ENCODE measurements at regions of chr16 and their contacts with region 1.

Region 1: GRCh38 chr16:22190776-22191531 is 15.1 kb upstream of the EEF2K start:
- DNase-seq: peak; percentile 99
- H3K4me3 ChIP-seq: peak overlapping the region; percentile 69 to 73
- H3K4me3 Mint-ChIP-seq: peak overlapping the region; percentile 82 to 98 (median 94)
- H3K27ac ChIP-seq: peak overlapping the region; percentile 95
- H3K27ac Mint-ChIP-seq: peak overlapping the region; percentile 99 to 100 (median 100)
- H3K4me1 ChIP-seq: peaks cover 70% of the 10 kb centered on the region
- H3K4me1 Mint-ChIP-seq: peaks cover 47 to 82% (median 62%) of the 10 kb centered on the region in 4 donors
- H3K27me3 ChIP-seq: no peaks in the 10 kb centered on the region
- H3K27me3 Mint-ChIP-seq: peaks cover 2 to 5% of the 10 kb centered on the region in 2 donors

Region 2: GRCh38 chr16:20741554-20742285 is 1449.2 kb before region 1 on chr16 and contains the start of gene THUMPD1:
- CTCF ChIA-PET with region 1: no interaction called
- POLR2A ChIA-PET with region 1: no interaction called
- intact Hi-C with region 1: loop called (anchors 10 kb)
- DNase-seq: peak; percentile 91 to 98 (median 96)
- H3K4me3 ChIP-seq: peak within 1 kb of the TSS; percentile 76 to 90
- H3K4me3 Mint-ChIP-seq: peak within 1 kb of the TSS; percentile 95 to 98 (median 96)
- H3K27ac ChIP-seq: peak within 1 kb of the TSS; percentile 98
- H3K27ac Mint-ChIP-seq: peak within 1 kb of the TSS; percentile 98 to 99 (median 99)
- H3K4me1 ChIP-seq: peaks cover 34% of the 10 kb centered on the region
- H3K4me1 Mint-ChIP-seq: peaks cover 15 to 33% (median 23%) of the 10 kb centered on the region in 4 donors
- H3K27me3 ChIP-seq: no peaks in the 10 kb centered on the region
- H3K27me3 Mint-ChIP-seq: no peaks in the 10 kb centered on the region
- total RNA-seq, gene THUMPD1: 73.2 to 74.4 TPM

Region 3: DNA sequence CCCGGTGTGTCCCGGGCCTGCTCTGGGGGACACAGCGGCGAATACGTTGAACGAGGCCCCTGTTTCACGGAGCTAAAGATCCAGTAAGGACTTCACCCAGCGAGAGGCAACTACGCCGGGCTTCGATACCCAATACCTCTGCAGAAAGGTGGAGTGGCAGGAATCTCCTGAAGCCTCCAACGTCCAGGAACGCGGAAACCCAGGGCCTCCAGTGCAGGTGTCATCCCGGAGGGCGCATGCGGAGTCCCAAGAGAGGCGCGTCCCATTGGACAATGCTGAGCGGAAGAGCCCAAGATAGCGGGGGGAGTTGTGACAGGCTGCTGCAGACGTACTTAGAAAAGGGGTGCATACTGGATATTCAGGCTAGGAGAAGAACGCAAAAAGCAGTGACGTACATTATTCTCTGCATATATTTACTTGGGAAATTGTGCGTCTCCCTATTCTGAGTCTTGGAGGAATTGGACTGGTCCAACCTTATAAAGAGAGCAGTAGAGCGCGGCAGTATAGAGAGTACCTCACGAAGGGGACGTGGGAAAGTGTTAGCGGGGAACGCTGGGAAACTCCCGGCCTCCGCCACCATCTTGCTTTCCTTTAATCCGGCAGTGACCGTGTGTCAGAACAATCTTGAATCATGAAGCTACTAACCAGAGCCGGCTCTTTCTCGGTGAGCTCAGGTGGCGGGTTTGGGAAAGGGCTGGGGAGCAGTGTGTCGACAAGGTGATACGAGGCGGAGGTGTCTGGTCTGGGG is 238.0 kb before region 1 on chr16 and contains the start of gene UQCRC2:
- CTCF ChIA-PET with region 1: interaction called, 16 read pairs
- POLR2A ChIA-PET with region 1: interaction called, 67 read pairs
- intact Hi-C with region 1: loop called (anchors 1 kb)
- DNase-seq: peak; percentile 90 to 94 (median 92)
- H3K4me3 ChIP-seq: peak within 1 kb of the TSS; percentile 98
- H3K4me3 Mint-ChIP-seq: peak within 1 kb of the TSS; percentile 96 to 100 (median 98)
- H3K27ac ChIP-seq: peak within 1 kb of the TSS; percentile 98
- H3K27ac Mint-ChIP-seq: peak within 1 kb of the TSS; percentile 95 to 100 (median 99)
- H3K4me1 ChIP-seq: peaks cover 53% of the 10 kb centered on the region
- H3K4me1 Mint-ChIP-seq: peaks cover 36 to 82% (median 59%) of the 10 kb centered on the region in 4 donors
- H3K27me3 ChIP-seq: no peaks in the 10 kb centered on the region
- H3K27me3 Mint-ChIP-seq: no peaks in the 10 kb centered on the region
- total RNA-seq, gene UQCRC2: 170 to 177 TPM

Region 4: GRCh38 chr16:22007509-22008214 is 183.3 kb before region 1 on chr16 and contains the start of gene MOSMO:
- CTCF ChIA-PET with region 1: interaction called, 172 read pairs
- POLR2A ChIA-PET with region 1: interaction called, 98 read pairs
- intact Hi-C with region 1: loop called (anchors 1 kb)
- DNase-seq: peak; percentile 65 to 73 (median 66)
- H3K4me3 ChIP-seq: peak within 1 kb of the TSS; percentile 12 to 74
- H3K4me3 Mint-ChIP-seq: peak within 1 kb of the TSS; percentile 86 to 93 (median 90)
- H3K27ac ChIP-seq: peak within 1 kb of the TSS; percentile 78
- H3K27ac Mint-ChIP-seq: peak within 1 kb of the TSS; percentile 61 to 97 (median 87)
- H3K4me1 ChIP-seq: peaks cover 41% of the 10 kb centered on the region
- H3K4me1 Mint-ChIP-seq: peaks cover 32 to 54% (median 40%) of the 10 kb centered on the region in 4 donors
- H3K27me3 ChIP-seq: no peaks in the 10 kb centered on the region
- H3K27me3 Mint-ChIP-seq: no peaks in the 10 kb centered on the region
- total RNA-seq, gene MOSMO: 21.9 to 23.4 TPM

Region 5: GRCh38 chr16:22177968-22178934 is 12.7 kb before region 1 on chr16:
- CTCF ChIA-PET with region 1: interaction called, 10 read pairs
- POLR2A ChIA-PET with region 1: interaction called, 6 read pairs
- intact Hi-C with region 1: no loop called
- DNase-seq: no peak
- H3K4me3 ChIP-seq: no peak overlapping the region
- H3K4me3 Mint-ChIP-seq: peak overlapping the region in 1 of 8 donors; percentile 27
- H3K27ac ChIP-seq: no peak overlapping the region
- H3K27ac Mint-ChIP-seq: peak overlapping the region in 1 of 7 donors; percentile 31
- H3K4me1 ChIP-seq: no peaks in the 10 kb centered on the region
- H3K4me1 Mint-ChIP-seq: no peaks in the 10 kb centered on the region
- H3K27me3 ChIP-seq: no peaks in the 10 kb centered on the region
- H3K27me3 Mint-ChIP-seq: peaks cover 0 to 1% of the 10 kb centered on the region in 2 donors

Region 6: DNA sequence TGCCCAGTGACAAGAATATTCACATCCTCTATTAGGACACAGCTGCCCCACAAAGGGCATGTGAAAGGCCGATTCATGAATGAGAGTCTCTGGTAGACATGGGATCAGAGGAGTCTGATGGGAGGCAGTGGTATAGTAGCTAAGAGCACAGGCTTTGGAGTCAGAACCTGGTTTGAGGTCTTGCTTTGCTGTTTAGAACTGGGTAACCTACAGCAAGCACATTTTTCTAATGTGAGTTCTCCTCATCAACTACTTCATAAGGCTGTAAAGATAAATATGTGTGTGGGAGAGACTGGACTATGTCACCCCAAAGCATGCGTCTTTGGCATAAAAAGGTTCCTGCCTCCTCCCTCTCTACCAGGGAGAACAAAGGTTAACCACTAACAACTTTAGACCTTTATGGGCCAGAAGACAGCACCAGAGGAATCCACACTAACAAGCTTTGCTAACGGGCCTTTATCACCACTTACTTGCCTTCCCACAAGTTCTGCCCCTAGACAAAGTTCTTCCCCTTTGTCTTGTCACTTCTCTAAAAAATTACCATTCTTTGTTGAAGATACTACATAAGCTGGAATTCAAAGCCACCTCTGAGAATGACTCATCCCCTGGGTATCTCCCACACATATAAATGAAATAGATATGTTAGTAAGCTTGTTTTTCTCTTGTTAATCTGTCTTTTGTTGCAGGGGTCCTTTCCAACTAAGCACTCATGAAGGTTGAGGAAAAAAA is 162.4 kb after region 1 on chr16:
- CTCF ChIA-PET with region 1: interaction called, 5 read pairs
- POLR2A ChIA-PET with region 1: interaction called, 40 read pairs
- intact Hi-C with region 1: no loop called
- DNase-seq: peak in 2 of 5 donors; percentile 15 to 60
- H3K4me3 ChIP-seq: no peak overlapping the region
- H3K4me3 Mint-ChIP-seq: peak overlapping the region in 6 of 8 donors; percentile 2 to 74 (median 36)
- H3K27ac ChIP-seq: peak overlapping the region; percentile 20
- H3K27ac Mint-ChIP-seq: peak overlapping the region; percentile 60 to 92 (median 80)
- H3K4me1 ChIP-seq: peaks cover 61% of the 10 kb centered on the region
- H3K4me1 Mint-ChIP-seq: peaks cover 39 to 67% (median 52%) of the 10 kb centered on the region in 4 donors
- H3K27me3 ChIP-seq: no peaks in the 10 kb centered on the region
- H3K27me3 Mint-ChIP-seq: no peaks in the 10 kb centered on the region